A673 (cell line): ENCODE measurements at regions of chr5 and their contacts with region 1.

Region 1: DNA sequence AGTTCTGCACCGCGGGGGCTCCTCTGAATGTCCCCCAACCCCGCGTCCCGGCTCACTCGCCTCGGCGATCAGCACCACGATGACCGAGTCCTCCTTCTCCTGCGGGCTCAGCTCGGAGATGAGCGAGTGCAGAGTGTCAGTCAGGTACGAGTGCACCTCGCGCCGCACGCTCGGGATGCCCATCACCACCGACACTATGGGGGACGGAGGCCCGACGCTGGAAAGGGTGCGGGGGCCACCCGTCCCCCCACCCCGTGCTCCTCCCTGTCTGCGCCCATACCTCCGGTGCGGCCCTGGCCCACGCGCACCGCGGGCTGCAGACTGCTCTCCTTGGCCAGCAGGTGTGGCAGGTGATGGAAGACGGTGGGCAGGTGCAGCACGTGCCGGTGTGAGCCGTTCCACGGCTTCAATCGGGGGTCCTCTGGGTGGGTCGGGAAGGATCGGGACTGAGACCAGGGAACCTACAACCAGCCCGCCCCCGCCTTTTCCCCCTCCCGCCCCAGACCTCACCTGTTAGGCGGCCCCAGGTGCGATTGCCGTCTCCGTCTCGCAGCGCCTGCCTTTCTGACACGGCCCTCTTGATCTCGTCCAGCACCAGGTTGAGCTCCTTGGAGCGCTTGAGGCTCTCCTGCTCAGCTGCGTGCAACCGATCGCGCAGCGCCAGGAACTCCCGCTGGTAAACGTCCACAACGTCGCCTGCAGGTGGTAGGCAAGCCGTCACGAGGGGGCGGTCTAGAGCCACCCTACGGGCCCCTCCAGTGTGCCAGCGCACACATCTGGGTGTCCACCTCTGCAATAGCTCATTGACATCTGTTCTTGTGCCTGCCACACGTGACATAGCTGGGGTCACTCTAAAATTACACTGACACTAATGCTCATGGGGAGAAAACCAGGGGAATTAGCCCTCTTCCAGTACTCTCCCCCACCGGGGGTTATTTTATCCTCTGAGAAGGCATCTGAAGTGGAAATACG is 5.1 kb downstream of the MGAT4B start:
- DNase-seq: peak; percentile 75
- H3K4me3 ChIP-seq: no peak overlapping the region
- H3K27ac ChIP-seq: no peak overlapping the region
- H3K4me1 ChIP-seq: peaks cover 28% of the 10 kb centered on the region
- H3K27me3 ChIP-seq: no peaks in the 10 kb centered on the region
- CTCF ChIP-seq: peak; percentile 80

Region 2: DNA sequence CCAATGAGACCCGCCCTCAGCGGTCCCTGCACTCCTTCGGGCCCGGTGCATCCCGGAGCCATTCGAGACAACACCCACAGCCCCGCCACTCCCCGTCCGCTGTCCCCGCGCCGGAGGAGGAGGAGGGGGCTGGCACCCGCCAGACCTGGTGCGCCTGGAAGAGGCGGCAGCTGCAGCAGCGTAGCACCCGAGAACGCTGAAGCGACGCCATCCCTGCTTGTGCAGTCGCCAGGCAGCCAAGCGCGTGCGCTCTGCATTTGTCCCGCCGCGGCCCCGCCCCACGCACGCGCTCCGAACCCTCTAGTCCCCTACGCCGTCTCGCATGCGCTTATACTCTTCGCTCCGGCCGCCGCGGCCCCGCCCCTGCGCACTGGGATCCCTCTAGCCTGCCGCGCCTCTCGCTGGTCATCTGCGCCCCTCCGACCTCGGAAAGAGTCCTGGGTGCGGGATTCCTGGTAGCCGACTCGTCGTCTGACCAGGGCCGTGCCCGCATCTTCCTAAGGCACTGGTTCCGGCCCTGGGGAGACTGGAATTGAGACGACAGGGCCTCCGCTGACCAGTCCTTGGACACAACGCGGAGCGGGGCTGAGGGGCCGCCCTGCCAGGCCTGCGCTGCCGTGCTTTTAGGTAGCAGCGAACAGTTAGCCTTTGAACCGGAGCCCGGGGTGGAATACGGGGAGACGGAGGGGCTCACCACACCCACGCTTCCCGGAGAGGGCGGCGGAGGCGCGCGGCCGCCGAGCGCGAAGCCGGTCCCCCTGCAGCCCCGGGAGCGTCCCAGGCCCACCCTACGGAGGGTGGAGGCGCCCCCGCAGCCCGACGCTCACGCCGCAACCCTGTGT is 57.2 kb after region 1 on chr5 and contains the start of gene MRNIP:
- CTCF ChIA-PET with region 1: no interaction called
- POLR2A ChIA-PET with region 1: no interaction called
- intact Hi-C with region 1: loop called (anchors 5 kb)
- DNase-seq: peak; percentile 95
- H3K4me3 ChIP-seq: peak within 1 kb of the TSS; percentile 87
- H3K27ac ChIP-seq: peak within 1 kb of the TSS; percentile 87
- H3K4me1 ChIP-seq: no peaks in the 10 kb centered on the region
- H3K27me3 ChIP-seq: no peaks in the 10 kb centered on the region
- CTCF ChIP-seq: no peak
- total RNA-seq, gene MRNIP: 29.9 and 31.3 TPM in 2 replicates

Region 3: DNA sequence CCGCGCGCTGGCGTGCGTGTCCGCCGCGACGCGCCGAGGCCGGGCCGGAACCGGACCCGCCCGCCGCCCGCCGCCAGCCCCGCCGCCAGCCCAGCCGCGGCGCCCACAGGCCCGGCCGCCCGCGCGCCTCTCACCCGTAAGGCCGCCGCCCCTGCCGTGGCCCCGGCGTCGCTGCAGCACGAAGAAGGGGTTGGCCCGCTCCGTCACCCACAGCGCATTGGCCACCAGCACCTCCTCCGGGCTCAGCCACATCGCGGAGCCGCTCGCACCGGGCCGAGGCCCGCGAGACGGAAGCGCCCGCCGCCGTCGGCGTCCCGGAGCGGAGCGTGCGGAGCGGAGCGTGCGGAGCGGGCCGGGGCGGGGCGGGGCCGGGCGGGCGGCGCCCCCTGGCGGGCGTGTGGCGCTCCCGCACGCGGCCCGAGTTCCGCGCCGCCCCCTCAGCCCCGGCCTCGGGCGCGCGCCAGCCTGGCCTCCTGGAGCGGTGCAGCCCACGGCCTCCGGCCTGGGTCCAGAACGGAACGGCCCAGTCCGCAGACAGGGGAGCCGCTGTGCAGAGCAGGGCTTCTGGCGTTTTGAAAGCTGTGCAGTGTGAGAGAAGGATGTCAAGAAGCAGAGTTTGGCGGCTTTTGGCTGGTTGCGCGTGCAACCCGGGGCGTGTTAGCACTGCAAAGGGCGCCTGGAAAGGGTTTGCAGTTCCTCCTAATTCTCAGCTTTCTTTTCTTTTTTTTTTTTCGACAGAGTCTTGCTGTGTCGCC is 106.2 kb after region 1 on chr5 and contains the start of gene TBC1D9B:
- CTCF ChIA-PET with region 1: interaction called, 7 read pairs
- POLR2A ChIA-PET with region 1: no interaction called
- intact Hi-C with region 1: loop called (anchors 5 kb)
- DNase-seq: peak; percentile 68
- H3K4me3 ChIP-seq: peak within 1 kb of the TSS; percentile 62
- H3K27ac ChIP-seq: no peak within 1 kb of the TSS
- H3K4me1 ChIP-seq: peaks cover 7% of the 10 kb centered on the region
- H3K27me3 ChIP-seq: no peaks in the 10 kb centered on the region
- CTCF ChIP-seq: no peak; the same call in 1 of the 2 replicates
- total RNA-seq, gene TBC1D9B: 68.2 and 77.0 TPM in 2 replicates

Region 4: DNA sequence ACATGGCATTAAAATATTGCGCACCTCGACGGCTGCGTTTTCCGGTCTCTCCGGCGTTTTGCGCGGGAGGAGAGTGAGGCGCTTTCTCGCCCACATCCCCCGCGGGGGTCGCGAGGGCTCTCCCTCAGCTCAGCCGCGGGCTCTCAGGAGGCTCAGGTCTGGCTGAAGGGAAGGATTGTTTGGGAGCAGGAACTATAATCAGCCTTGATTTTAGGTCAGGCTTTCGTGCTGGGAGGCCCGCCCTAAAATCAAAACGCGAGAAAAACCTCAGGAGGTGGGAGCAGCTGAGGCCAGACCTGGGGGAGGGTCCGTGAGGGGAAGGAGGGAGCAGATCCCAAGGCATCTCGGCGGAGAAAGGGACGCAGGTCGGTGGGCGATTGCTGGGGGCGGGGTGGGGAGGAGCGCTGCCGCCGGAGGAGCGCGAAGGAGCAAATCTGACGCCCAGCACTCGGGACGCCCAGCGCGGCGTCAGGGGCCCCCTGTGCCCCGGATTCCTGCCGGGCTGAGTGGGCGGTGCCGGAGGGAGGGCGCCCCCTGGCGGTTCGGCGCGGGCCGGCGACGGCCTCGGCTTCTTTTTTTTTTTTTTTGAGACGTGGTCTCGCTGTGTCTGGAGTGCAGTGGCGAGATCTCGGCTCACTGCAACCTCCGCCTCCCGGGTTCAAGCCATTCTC is 288.7 kb after region 1 on chr5:
- CTCF ChIA-PET with region 1: no interaction called
- POLR2A ChIA-PET with region 1: no interaction called
- intact Hi-C with region 1: loop called (anchors 5 kb)
- DNase-seq: peak; percentile 75
- H3K4me3 ChIP-seq: peak overlapping the region; percentile 52
- H3K27ac ChIP-seq: peak overlapping the region; percentile 40
- H3K4me1 ChIP-seq: no peaks in the 10 kb centered on the region
- H3K27me3 ChIP-seq: no peaks in the 10 kb centered on the region
- CTCF ChIP-seq: peak; percentile 71